B cell (primary cell): ENCODE measurements at regions of chr2 and their contacts with region 1.

Region 1: DNA sequence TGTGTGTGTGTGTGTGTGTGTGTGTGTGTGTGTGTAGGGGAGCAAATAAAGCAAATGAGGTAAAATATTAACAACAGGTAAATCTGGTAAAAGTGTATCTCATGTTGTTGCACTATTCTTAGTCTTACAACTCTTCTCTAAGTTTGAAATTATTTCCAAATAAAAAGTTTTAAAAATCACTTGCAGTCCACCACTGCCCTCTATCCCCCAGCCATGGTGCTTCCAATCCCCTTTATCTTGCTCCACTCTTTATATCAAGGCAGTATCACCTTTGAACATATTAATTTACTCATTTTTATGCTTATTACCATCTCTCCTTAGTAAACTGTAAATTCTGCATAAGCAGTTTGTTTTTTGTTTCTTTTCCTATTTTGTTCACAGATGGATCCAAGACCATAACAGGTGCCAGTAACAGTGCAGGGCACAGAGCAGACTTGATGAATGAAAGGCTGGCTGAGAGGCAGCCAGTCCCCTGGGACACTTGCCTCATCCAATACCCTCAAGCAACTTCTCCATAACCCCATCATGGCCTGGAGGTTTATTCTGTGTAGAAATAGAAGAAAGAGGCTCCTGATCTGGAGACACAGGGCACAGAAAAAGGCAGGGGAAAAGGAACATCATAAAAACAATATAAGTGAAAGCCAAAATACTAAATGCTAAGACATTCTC is 67.6 kb downstream of the LDAH start:
- DNase-seq: peak; percentile 27
- ATAC-seq: no peak
- H3K4me3 ChIP-seq: no peak overlapping the region
- H3K4me3 Mint-ChIP-seq: no peak overlapping the region
- H3K27ac ChIP-seq: no peak overlapping the region
- H3K27ac Mint-ChIP-seq: no peak overlapping the region
- H3K4me1 ChIP-seq: no peaks in the 10 kb centered on the region
- H3K4me1 Mint-ChIP-seq: peaks cover 4% of the 10 kb centered on the region
- H3K27me3 ChIP-seq: no peaks in the 10 kb centered on the region
- H3K27me3 Mint-ChIP-seq: no peaks in the 10 kb centered on the region
- CTCF ChIP-seq: peak; percentile 26

Region 2: DNA sequence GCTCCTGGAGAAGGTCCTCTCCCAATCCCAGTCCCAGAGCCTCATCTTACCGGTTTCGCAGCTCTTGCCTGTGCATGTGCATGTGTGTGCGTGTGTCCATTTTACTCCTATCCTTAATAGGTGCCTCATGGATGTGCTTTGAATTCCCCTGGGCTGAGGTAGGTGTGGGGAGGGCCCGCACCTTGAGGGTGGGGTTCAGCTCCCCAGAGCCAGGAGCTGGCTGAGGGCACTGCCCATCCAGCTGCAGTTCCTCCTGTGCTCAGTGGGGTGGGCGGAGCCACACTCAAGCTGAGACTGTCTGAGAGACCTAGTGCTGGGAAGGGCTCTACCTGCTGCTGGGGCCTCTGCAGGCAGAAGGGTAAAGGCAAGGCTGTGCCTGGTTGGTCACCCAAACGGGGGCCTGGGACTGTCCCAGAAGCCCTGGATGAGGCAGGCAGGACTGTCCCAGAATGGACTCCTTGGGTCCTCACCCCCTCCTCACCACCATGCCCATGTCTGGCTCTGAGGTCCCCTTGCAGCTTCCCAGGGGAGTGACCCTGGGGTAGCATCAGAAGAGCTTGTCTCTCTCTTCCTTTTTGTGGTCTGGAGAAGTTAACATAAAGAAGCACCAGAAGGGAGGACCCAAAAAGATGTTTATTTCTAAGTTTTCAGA is 79.4 kb before region 1 on chr2:
- CTCF ChIA-PET with region 1: no interaction called
- POLR2A ChIA-PET with region 1: no interaction called
- intact Hi-C with region 1: loop called (anchors 1 kb)
- DNase-seq: peak; percentile 83
- ATAC-seq: peak; percentile 79
- H3K4me3 ChIP-seq: peak overlapping the region in 1 of 5 experiments; percentile 15
- H3K4me3 Mint-ChIP-seq: peak overlapping the region; percentile 80
- H3K27ac ChIP-seq: peak overlapping the region; percentile 63 to 82
- H3K27ac Mint-ChIP-seq: peak overlapping the region; percentile 98
- H3K4me1 ChIP-seq: peaks cover 35 to 86% of the 10 kb centered on the region in 2 donors
- H3K4me1 Mint-ChIP-seq: peaks cover 59% of the 10 kb centered on the region
- H3K27me3 ChIP-seq: peaks cover 0 to 16% (median 4%) of the 10 kb centered on the region in 4 experiments
- H3K27me3 Mint-ChIP-seq: no peaks in the 10 kb centered on the region
- CTCF ChIP-seq: no peak

Region 3: GRCh38 chr2:20687260-20687832 is 67.9 kb before region 1 on chr2:
- CTCF ChIA-PET with region 1: no interaction called
- POLR2A ChIA-PET with region 1: no interaction called
- intact Hi-C with region 1: no loop called
- DNase-seq: no peak
- ATAC-seq: no peak
- H3K4me3 ChIP-seq: no peak overlapping the region
- H3K4me3 Mint-ChIP-seq: no peak overlapping the region
- H3K27ac ChIP-seq: no peak overlapping the region
- H3K27ac Mint-ChIP-seq: no peak overlapping the region
- H3K4me1 ChIP-seq: no peaks in the 10 kb centered on the region
- H3K4me1 Mint-ChIP-seq: peaks cover 1% of the 10 kb centered on the region
- H3K27me3 ChIP-seq: no peaks in the 10 kb centered on the region
- H3K27me3 Mint-ChIP-seq: no peaks in the 10 kb centered on the region
- CTCF ChIP-seq: no peak